HCT116 (cell line): ENCODE measurements at regions of chr5 and their contacts with region 1.

Region 1: GRCh38 chr5:103224118-103224893 is 34.3 kb upstream of the MACIR start:
- DNase-seq: peak; percentile 57
- ATAC-seq: peak; percentile 97
- H3K4me3 ChIP-seq: no peak overlapping the region
- H3K27ac ChIP-seq: no peak overlapping the region
- H3K4me1 ChIP-seq: peaks cover 0 to 7% of the 10 kb centered on the region in 2 experiments; a peak in 1 of 4 replicates
- H3K27me3 ChIP-seq: no peaks in the 10 kb centered on the region
- CTCF ChIP-seq: peak; percentile 43 to 73 (median 67); a peak in 5 of 6 replicates
- POLR2A ChIP-seq: no peak
- RAD21 ChIP-seq: peak; percentile 75

Region 2: DNA sequence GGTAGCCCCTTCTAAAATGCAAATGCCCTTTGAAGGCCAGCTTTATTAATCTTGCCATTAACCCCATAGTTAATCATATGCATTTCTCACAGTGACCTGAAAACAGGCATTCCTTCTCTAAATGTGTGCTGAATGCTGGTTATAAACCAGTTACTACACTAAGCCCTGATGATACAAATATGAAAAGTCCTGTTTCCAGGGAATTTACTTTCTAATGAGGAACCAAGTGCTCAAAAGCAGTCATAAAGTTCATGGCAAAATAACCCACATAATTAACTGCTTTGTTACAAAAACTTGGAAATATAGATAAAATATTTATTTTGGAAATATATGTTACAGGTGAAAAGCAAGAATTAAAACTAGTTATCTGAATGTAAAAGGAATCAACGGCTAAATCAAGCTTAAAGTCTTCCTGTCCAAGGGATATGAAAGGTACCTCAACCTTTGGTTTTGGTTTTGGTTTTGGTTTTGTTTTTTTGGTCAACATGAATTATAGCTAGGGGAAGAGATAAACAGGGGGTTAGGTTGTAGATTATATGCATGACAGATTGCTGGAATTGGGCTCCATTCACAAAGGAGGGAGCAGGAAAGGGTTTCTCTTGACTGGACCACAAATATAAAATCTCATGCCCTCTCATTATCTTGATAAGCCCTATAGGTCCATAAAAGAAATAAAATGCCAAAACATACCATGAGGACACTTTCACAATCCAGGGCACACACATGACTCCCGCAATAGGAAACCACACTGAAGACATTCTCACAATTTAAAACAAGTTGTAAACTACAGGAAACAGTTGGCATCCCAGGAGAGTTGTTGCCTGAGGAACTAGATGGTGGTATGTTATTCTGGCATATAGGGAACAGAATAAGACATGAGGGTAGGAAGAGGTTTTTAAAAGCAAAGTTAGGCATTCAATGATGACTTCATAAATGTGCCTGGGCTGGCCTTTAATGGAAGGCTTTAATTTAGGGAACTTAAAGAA is 12.4 kb before region 1 on chr5:
- CTCF ChIA-PET with region 1: interaction called, 12 read pairs
- POLR2A ChIA-PET with region 1: interaction called, 3 read pairs
- RAD21 ChIA-PET with region 1: interaction called in 1 of 2 experiments, 4 read pairs
- intact Hi-C with region 1: no loop called
- DNase-seq: no peak
- ATAC-seq: no peak
- H3K4me3 ChIP-seq: no peak overlapping the region
- H3K27ac ChIP-seq: no peak overlapping the region
- H3K4me1 ChIP-seq: peaks cover 0 to 3% of the 10 kb centered on the region in 2 experiments; a peak in 1 of 4 replicates
- H3K27me3 ChIP-seq: no peaks in the 10 kb centered on the region
- CTCF ChIP-seq: no peak
- POLR2A ChIP-seq: no peak
- RAD21 ChIP-seq: no peak

Region 3: DNA sequence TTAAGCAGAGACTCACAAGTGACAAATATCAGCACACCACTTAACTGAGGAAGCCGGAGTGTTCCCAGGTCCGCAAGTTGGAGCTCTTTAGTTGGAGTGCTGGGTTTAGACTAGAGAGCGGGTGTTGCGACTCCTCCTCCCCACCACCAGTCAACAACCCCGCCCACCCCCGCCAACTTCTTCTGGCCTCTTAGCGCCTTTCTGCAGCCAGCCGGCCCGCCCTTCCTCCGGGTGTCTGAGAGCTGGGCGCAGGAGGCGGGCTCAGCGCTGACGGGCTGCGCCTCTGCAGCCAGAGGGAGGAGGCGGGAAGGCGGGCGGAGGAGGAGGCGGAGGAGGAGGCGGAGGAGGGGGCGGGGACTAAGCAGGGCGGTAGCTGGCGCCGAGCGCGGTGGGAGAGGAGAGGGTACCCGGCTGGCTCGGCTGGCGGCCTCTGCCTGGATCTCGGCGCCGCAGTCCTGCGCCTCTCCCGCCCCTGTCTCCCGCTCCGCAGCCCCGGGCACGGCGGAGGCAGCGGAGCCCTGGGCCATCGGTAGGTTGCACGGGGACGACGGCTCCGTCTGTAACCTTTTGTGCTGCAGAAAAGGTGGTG is 34.2 kb after region 1 on chr5 and contains the start of gene MACIR:
- CTCF ChIA-PET with region 1: interaction called, 18 read pairs
- POLR2A ChIA-PET with region 1: no interaction called
- RAD21 ChIA-PET with region 1: interaction called in 1 of 2 experiments, 4 read pairs
- intact Hi-C with region 1: no loop called
- DNase-seq: peak; percentile 94
- ATAC-seq: peak; percentile 92
- H3K4me3 ChIP-seq: peak within 1 kb of the TSS; percentile 75 to 86
- H3K27ac ChIP-seq: peak within 1 kb of the TSS; percentile 89
- H3K4me1 ChIP-seq: peaks cover 3 to 25% of the 10 kb centered on the region in 2 experiments
- H3K27me3 ChIP-seq: no peaks in the 10 kb centered on the region
- CTCF ChIP-seq: no peak
- POLR2A ChIP-seq: peak; percentile 84
- RAD21 ChIP-seq: no peak
- total RNA-seq, gene MACIR: 10.4 TPM

Region 4: DNA sequence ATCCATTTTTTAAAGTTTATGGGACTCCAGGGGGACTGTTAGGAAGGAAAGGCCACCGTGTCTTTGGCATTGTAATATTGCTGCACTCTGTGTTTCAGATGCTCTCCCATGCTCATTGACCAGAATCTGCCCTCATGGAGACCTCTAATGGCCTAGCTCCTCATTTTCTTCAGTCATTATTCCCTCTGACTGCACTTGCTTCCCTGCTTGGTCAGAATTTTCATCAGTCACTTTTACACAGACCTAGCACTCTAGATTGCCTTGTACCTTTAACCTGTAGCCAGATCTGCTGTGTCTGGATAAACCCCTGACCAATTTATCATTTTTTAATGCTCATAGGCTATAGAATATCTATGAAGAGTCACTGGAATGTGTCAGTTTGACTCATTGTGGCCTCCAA is 493.8 kb after region 1 on chr5:
- CTCF ChIA-PET with region 1: no interaction called
- POLR2A ChIA-PET with region 1: no interaction called
- RAD21 ChIA-PET with region 1: no interaction called
- intact Hi-C with region 1: no loop called
- DNase-seq: no peak
- ATAC-seq: no peak
- H3K4me3 ChIP-seq: no peak overlapping the region
- H3K27ac ChIP-seq: no peak overlapping the region
- H3K4me1 ChIP-seq: no peaks in the 10 kb centered on the region
- H3K27me3 ChIP-seq: no peaks in the 10 kb centered on the region
- CTCF ChIP-seq: no peak
- POLR2A ChIP-seq: no peak
- RAD21 ChIP-seq: no peak